Activated CD8-positive, alpha-beta T cell treated with anti-CD3 and anti-CD28 coated beads, Interleukin-2, amount 10 ng/mL, durations not matched to agents 7 days and 5 days (primary cell): ENCODE measurements at regions of chr22 and their contacts with region 1.

Region 1: DNA sequence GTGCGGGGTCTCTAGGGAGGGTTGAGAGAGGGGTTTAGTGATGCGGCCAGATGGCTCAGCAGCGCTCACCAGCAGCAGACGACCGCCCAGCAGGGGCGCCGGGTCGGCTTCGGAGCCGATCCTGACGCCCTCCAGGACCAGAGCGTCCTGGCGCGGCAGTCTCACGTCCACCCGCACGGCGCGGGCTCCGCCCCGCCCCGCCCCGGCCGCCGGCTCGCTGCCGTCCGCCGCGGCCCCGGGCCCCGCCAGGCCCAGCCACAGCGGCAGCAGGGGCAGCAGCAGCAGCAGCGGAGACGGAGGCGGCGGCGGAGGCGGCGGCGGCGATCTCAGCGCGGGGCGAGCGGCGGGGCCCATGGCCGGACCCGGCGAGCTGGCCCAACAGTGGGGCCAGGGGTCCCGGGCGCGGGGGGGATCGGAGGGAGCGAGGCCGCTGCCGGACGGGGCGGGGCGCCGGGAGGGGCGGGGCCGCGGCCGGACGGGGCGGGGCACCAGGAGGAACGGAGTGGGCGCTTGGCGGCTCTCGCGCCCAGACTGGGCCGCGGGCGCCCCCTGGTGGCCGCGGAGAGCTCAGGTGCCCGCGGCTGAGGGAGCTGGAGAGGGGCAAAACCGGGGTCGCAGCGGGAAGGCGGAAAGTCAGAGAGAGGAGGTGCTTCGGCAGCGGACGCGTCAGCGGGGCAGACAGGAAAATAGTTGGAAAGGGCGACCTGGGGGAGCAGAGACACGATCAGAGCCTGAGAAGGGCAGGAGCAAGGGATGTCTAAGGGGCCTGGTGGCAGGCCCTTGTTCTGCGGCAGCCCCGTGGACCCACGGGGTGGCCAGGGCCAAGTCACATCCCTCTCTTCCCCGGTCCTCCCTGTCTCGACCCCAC is at the start of gene RNF215:
- DNase-seq: peak; percentile 85
- ATAC-seq: peak; percentile 83
- H3K4me3 Mint-ChIP-seq: peak within 1 kb of the TSS; percentile 80
- H3K27ac Mint-ChIP-seq: peak within 1 kb of the TSS; percentile 78
- H3K4me1 Mint-ChIP-seq: peaks cover 32% of the 10 kb centered on the region
- H3K27me3 Mint-ChIP-seq: no peaks in the 10 kb centered on the region
- total RNA-seq, gene RNF215: 12.0 to 14.6 TPM

Region 2: GRCh38 chr22:30262917-30263741 is 124.1 kb before region 1 on chr22:
- CTCF ChIA-PET with region 1: interaction called, 17 read pairs
- POLR2A ChIA-PET with region 1: interaction called, 3 read pairs
- DNase-seq: peak; percentile 87
- ATAC-seq: no peak
- H3K4me3 Mint-ChIP-seq: peak overlapping the region; percentile 96
- H3K27ac Mint-ChIP-seq: peak overlapping the region; percentile 97
- H3K4me1 Mint-ChIP-seq: peaks cover 61% of the 10 kb centered on the region
- H3K27me3 Mint-ChIP-seq: no peaks in the 10 kb centered on the region

Region 3: DNA sequence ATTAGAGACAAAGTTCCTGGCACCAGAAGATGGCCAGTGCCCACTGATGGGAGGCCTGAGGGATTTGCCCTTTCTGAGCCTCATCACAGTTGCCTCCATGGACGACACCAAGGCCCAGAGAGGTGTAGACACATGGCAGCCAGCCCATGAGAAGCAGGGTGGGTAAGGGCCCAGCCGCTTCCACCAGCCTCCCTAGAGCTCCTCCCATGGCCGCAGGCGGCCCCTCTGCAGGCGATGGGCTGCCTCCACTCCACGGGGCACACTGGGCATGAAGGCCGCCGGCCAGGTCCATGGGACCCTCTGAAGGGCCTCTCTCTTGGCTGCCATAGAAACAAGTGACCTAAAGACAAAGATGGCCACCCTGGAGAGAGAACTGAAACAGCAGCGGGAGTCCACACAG is 15.9 kb before region 1 on chr22:
- CTCF ChIA-PET with region 1: no interaction called
- POLR2A ChIA-PET with region 1: no interaction called
- DNase-seq: no peak
- ATAC-seq: no peak
- H3K4me3 Mint-ChIP-seq: no peak overlapping the region
- H3K27ac Mint-ChIP-seq: no peak overlapping the region
- H3K4me1 Mint-ChIP-seq: no peaks in the 10 kb centered on the region
- H3K27me3 Mint-ChIP-seq: no peaks in the 10 kb centered on the region

Region 4: DNA sequence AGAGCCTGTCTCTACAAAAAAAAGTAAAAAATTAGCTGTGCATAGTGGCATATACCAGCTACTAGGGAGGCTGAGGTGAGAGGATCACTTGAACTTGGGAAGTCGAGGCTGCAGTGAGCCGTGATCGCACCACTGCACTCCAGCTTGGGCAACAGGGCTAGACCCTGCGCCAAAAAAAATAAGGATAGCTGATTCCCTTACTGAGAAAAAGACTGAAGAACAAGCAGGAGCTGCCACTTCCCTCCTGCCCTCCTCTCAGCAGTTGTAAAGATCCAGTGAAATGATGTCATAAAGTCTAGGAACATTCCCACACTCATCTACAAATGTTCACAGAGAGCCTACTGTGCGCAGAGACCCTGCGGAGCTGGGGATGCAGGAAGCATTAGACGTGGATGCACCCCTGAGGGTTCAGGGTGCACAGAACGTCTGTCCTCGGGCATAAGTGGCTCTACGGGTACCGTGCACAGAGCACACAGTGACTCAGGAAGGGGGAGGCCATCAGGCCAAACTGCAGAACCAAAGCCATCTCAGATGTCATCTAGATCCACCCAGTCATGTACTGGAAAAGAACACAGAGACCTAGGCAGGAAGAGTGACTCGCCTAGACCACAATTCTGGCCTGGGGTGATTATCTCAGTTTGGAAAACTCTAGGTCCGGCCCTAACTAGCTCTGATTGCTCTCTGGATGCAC is 21.4 kb after region 1 on chr22:
- CTCF ChIA-PET with region 1: interaction called, 26 read pairs
- POLR2A ChIA-PET with region 1: no interaction called
- DNase-seq: no peak
- ATAC-seq: no peak
- H3K4me3 Mint-ChIP-seq: no peak overlapping the region
- H3K27ac Mint-ChIP-seq: no peak overlapping the region
- H3K4me1 Mint-ChIP-seq: peaks cover 8% of the 10 kb centered on the region
- H3K27me3 Mint-ChIP-seq: no peaks in the 10 kb centered on the region

Region 5: GRCh38 chr22:30413745-30414524 is 26.7 kb after region 1 on chr22:
- CTCF ChIA-PET with region 1: interaction called, 26 read pairs
- POLR2A ChIA-PET with region 1: no interaction called
- DNase-seq: no peak
- ATAC-seq: no peak
- H3K4me3 Mint-ChIP-seq: no peak overlapping the region
- H3K27ac Mint-ChIP-seq: peak overlapping the region; percentile 49
- H3K4me1 Mint-ChIP-seq: peaks cover 11% of the 10 kb centered on the region
- H3K27me3 Mint-ChIP-seq: no peaks in the 10 kb centered on the region

Region 6: DNA sequence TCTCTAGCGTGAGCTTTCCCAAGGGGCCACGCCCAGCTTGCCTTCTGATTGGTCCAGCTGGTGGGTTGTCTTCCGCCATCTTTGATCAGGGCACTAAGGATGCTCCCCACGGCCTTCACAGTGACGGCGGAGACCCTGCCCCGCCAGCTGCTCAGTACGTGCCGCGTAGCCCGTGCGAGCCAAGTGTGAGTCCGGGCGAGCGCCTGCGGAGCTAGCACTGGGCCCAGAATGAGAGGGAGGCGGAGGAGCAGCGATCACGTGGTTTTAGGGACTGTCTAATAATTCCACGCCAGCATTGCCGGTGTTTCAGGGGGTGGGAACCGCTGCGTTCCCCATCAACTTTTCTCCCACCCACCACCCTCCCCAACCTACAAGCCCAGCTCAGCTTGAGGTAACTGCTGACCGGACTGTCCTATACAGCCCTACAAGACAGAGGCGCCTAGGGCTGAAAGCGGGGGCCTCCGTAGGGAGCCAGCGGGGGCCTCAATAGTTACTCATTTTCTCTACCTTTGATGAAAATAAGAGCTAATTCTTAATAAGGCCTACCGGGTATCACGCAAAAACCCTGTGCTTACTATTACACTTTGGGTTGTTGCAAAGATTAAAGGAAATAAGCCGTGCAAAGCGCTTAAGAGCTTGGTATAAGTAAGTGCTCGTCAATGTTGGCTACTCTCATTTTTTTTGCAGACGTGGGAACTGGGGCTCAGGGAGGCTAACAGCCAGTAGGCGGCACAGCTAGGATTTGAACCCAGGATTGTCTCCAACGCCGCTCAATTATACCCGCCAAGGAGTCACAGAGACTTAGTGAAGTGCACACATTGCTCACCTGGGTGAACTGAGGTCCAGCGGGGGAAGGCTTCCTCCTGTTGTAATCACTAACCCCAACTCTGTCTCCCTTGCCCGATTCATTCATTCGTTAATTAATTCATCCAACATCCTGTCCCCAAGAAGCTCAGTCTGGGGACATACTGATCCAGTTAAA is 37.1 kb after region 1 on chr22:
- CTCF ChIA-PET with region 1: interaction called, 166 read pairs
- POLR2A ChIA-PET with region 1: interaction called, 18 read pairs
- DNase-seq: peak; percentile 100
- ATAC-seq: peak; percentile 91
- H3K4me3 Mint-ChIP-seq: peak overlapping the region; percentile 97
- H3K27ac Mint-ChIP-seq: peak overlapping the region; percentile 97
- H3K4me1 Mint-ChIP-seq: peaks cover 53% of the 10 kb centered on the region
- H3K27me3 Mint-ChIP-seq: no peaks in the 10 kb centered on the region

Region 7: DNA sequence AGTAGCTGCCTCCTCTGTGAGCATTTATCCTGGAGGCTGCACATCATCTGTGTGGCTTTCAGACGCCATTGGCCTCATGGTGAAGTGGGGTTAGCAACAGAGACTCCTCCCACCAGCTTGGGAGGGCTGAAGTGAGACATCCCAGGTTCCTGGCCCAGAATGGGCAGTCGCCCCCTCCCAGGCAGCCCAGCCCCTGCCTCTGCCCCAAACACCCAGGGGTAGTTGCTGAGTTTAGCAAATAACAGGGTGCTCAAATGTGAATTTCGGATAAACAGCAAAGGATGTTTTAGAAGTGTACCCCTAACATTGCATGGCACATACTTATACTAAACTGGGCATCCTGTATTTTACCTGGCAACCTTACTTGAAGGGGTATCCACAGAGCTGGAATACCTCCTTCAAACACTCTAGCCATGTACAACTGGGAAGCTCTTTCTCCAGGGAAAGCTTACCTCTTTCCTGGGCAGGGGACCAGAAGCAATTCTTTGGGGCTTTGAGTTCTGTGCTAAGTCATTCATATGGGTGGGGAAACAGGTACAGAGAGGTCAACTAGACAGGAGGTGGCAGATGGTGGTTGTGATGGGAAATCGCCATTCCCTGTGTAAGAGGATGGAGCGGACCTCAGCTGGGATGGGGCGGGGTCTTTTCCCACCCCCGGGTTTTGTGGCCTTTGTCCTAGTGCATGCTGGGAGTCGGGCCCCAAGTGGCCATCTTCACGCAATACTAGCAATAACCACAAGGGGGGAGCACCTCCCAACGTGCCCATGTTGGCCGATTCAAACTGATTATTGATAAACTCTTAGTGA is 57.6 kb after region 1 on chr22:
- CTCF ChIA-PET with region 1: interaction called, 15 read pairs
- POLR2A ChIA-PET with region 1: no interaction called
- DNase-seq: peak; percentile 70
- ATAC-seq: peak; percentile 43
- H3K4me3 Mint-ChIP-seq: no peak overlapping the region
- H3K27ac Mint-ChIP-seq: no peak overlapping the region
- H3K4me1 Mint-ChIP-seq: peaks cover 32% of the 10 kb centered on the region
- H3K27me3 Mint-ChIP-seq: peaks cover 18% of the 10 kb centered on the region

Region 8: DNA sequence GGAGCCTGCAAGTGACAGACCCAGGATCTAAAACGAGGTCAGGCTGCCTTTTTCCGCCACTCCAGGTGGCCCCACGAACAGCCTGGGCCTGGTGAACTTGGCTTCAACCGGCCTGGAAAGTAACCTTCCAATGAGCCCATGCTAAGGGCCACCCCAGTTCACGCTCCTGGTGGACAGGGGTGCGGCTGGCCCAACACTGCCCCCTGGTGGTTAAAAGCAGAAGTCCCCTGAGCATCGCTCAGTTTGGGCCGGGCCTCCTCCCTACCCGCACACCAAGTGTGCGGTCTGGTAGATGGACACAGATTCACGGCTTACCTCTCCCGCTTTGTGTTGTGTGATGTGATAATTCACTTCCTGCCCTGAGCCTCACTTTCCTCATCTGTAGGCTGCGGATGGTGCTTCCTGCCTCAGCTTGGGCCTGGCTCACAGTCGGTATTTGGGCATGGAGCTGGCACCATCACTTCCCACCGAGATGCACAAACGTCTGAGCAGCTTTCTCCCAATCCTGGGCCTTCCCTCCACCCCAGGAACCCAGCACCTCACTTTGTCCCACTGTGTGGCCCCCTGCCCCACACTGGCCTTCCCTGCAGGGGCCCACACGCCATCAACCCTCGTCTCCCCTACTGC is 98.3 kb after region 1 on chr22:
- CTCF ChIA-PET with region 1: interaction called, 54 read pairs
- POLR2A ChIA-PET with region 1: no interaction called
- DNase-seq: peak; percentile 83
- ATAC-seq: peak; percentile 99
- H3K4me3 Mint-ChIP-seq: no peak overlapping the region
- H3K27ac Mint-ChIP-seq: no peak overlapping the region
- H3K4me1 Mint-ChIP-seq: peaks cover 7% of the 10 kb centered on the region
- H3K27me3 Mint-ChIP-seq: no peaks in the 10 kb centered on the region

Region 9: GRCh38 chr22:30506507-30506968 is 119.3 kb after region 1 on chr22:
- CTCF ChIA-PET with region 1: no interaction called
- POLR2A ChIA-PET with region 1: no interaction called
- DNase-seq: no peak
- ATAC-seq: no peak
- H3K4me3 Mint-ChIP-seq: no peak overlapping the region
- H3K27ac Mint-ChIP-seq: no peak overlapping the region
- H3K4me1 Mint-ChIP-seq: no peaks in the 10 kb centered on the region
- H3K27me3 Mint-ChIP-seq: peaks cover 22% of the 10 kb centered on the region